Activated CD4-positive, alpha-beta T cell treated with anti-CD3 and anti-CD28 coated beads, Interleukin-2, amount 10 ng/mL, durations not matched to agents 24 days and 14 days (primary cell): ENCODE measurements at regions of chr3 and their contacts with region 1.

Region 1: GRCh38 chr3:183468424-183468823 is 40.0 kb upstream of the MCF2L2 start:
- DNase-seq: no peak
- H3K4me3 Mint-ChIP-seq: no peak overlapping the region
- H3K27ac Mint-ChIP-seq: peak overlapping the region; percentile 78
- H3K4me1 Mint-ChIP-seq: peaks cover 16% of the 10 kb centered on the region
- H3K27me3 Mint-ChIP-seq: peaks cover 4% of the 10 kb centered on the region

Region 2: GRCh38 chr3:183447206-183448001 is 21.0 kb before region 1 on chr3:
- intact Hi-C with region 1: loop called (anchors 1 kb)
- DNase-seq: peak; percentile 94
- H3K4me3 Mint-ChIP-seq: peak overlapping the region; percentile 98
- H3K27ac Mint-ChIP-seq: peak overlapping the region; percentile 90
- H3K4me1 Mint-ChIP-seq: peaks cover 15% of the 10 kb centered on the region
- H3K27me3 Mint-ChIP-seq: peaks cover 14% of the 10 kb centered on the region

Region 3: GRCh38 chr3:183515968-183516851 is 47.8 kb after region 1 on chr3:
- intact Hi-C with region 1: loop called (anchors 2 kb)
- DNase-seq: peak; percentile 88
- H3K4me3 Mint-ChIP-seq: peak overlapping the region; percentile 39
- H3K27ac Mint-ChIP-seq: peak overlapping the region; percentile 90
- H3K4me1 Mint-ChIP-seq: peaks cover 67% of the 10 kb centered on the region
- H3K27me3 Mint-ChIP-seq: no peaks in the 10 kb centered on the region

Region 4: GRCh38 chr3:183697610-183698317 is 229.3 kb after region 1 on chr3 and contains the start of gene YEATS2:
- intact Hi-C with region 1: loop called (anchors 1 kb)
- DNase-seq: peak; percentile 91
- H3K4me3 Mint-ChIP-seq: peak within 1 kb of the TSS; percentile 92
- H3K27ac Mint-ChIP-seq: peak within 1 kb of the TSS; percentile 85
- H3K4me1 Mint-ChIP-seq: peaks cover 31% of the 10 kb centered on the region
- H3K27me3 Mint-ChIP-seq: no peaks in the 10 kb centered on the region
- total RNA-seq, gene YEATS2: 58.4 and 62.2 TPM in 2 replicates

Region 5: DNA sequence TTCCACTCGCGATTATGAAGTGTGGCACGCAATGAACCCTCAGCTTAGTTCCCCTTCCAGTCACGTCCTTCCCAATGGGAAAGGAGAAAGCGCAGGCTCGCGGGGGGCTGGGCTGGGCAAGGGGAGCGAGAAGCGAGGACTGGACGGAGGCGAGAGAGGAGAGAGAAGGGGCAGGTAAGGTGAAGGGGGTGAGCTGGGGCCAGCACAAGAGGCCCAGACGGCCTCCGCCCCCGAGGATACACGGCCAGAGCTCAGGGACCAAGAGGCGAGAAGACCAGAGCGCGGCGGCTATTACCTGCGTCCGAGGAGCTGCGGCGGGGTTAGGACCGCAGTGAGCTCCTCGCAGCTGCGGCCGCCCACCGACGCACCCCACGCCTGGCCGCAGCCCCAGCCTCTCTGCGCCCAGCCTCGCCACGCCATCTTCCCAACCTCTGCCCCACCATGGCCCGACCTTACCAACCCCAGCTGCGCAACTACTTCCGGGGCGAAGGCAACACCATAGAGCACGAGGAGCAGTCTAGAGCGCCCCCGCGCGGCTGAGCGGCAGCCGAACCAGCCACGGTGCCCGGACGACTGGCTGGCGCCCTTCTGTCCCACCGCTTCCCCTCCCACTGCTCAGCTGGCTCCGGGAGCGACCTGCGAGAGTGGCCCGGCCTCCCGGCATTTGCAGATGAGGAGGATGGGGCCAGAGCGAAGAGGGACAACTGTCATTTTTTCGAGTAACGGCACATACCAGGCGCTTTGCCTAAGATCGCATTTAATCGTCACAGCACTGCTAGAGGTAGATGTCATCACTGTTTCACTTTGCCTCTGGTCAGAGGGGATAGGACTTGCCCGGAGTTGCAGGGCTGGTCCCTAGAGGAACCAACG is 416.2 kb after region 1 on chr3 and contains the start of gene PARL:
- intact Hi-C with region 1: loop called (anchors 1 kb)
- DNase-seq: peak; percentile 99
- H3K4me3 Mint-ChIP-seq: peak within 1 kb of the TSS; percentile 94
- H3K27ac Mint-ChIP-seq: peak within 1 kb of the TSS; percentile 93
- H3K4me1 Mint-ChIP-seq: peaks cover 23% of the 10 kb centered on the region
- H3K27me3 Mint-ChIP-seq: peaks cover 2% of the 10 kb centered on the region
- total RNA-seq, gene PARL: 89.5 and 91.4 TPM in 2 replicates